Common myeloid progenitor, CD34-positive (primary cell): ENCODE measurements at regions of chr16 and their contacts with region 1.

Region 1: GRCh38 chr16:68040507-68041288 is 17.6 kb downstream of the DUS2 start:
- DNase-seq: peak; percentile 84 to 89 (median 89)
- H3K4me3 ChIP-seq: no peak overlapping the region
- H3K27ac ChIP-seq: no peak overlapping the region
- H3K4me1 ChIP-seq: peaks cover 7 to 21% (median 18%) of the 10 kb centered on the region in 4 experiments
- H3K27me3 ChIP-seq: no peaks in the 10 kb centered on the region

Region 2: DNA sequence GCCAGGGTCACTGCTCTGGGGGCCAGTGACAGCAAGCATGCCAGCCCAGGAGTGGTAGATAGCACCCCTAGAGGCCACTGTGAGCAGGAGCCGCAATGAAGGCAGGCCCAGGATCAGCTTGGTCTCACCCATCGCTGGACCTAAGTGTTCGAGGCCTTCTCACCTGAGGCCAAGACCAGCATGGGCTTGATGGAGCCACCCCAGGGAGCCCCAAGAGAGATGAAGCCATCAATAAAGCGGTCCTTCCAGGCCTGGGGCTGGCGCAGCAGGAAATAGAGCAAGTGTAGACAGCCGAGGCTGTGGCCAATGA is 98.5 kb before region 1 on chr16:
- CTCF ChIA-PET with region 1: interaction called, 16 read pairs
- POLR2A ChIA-PET with region 1: no interaction called
- DNase-seq: peak in 2 of 3 donors; percentile 32 to 37
- H3K4me3 ChIP-seq: no peak overlapping the region
- H3K27ac ChIP-seq: no peak overlapping the region
- H3K4me1 ChIP-seq: peaks cover 1 to 21% (median 15%) of the 10 kb centered on the region in 4 experiments
- H3K27me3 ChIP-seq: no peaks in the 10 kb centered on the region

Region 3: DNA sequence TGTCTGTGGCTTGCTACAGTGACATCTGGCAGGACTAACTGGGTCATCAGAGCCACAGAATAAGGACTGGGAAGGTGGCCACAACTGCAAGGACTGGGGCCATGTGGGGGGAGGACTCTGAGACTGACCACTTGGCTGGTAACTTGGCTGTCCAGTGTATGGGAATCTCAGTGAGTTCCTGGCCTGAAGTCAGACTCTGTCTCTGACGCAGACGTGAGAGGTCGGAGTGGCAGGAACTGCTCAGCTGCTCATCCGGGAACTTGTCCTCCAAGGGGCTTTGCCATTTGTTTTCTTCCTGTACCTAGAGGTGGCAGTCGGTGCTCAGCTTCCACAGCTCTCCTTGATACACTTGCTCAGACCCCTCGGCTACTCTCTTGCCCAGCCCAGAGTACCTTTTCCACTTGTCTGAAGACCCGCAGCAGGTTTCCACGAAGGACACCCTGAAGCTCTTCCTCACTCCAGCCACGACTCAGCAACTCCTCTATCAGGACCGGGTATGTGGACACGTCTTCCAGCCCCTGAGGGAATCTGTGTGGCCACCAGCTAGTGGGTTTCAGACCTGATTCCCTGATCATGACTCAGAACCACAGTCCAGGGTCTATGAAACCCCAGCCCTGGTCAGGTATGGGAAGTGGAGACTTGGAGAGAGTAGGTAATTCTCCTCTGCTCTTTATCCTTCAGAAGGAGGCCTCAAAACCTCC is 53.1 kb before region 1 on chr16:
- CTCF ChIA-PET with region 1: interaction called, 17 read pairs
- POLR2A ChIA-PET with region 1: interaction called, 5 read pairs
- DNase-seq: no peak
- H3K4me3 ChIP-seq: no peak overlapping the region
- H3K27ac ChIP-seq: no peak overlapping the region
- H3K4me1 ChIP-seq: peaks cover 13 to 35% (median 30%) of the 10 kb centered on the region in 4 experiments
- H3K27me3 ChIP-seq: no peaks in the 10 kb centered on the region

Region 4: GRCh38 chr16:67993189-67994039 is 47.3 kb before region 1 on chr16:
- CTCF ChIA-PET with region 1: interaction called, 17 read pairs
- POLR2A ChIA-PET with region 1: no interaction called
- DNase-seq: peak; percentile 85 to 91 (median 88)
- H3K4me3 ChIP-seq: peak overlapping the region in 5 of 7 experiments; percentile 38 to 67 (median 57)
- H3K27ac ChIP-seq: peak overlapping the region in 1 of 2 experiments; percentile 81
- H3K4me1 ChIP-seq: peaks cover 0 to 34% (median 32%) of the 10 kb centered on the region in 4 experiments
- H3K27me3 ChIP-seq: no peaks in the 10 kb centered on the region

Region 5: DNA sequence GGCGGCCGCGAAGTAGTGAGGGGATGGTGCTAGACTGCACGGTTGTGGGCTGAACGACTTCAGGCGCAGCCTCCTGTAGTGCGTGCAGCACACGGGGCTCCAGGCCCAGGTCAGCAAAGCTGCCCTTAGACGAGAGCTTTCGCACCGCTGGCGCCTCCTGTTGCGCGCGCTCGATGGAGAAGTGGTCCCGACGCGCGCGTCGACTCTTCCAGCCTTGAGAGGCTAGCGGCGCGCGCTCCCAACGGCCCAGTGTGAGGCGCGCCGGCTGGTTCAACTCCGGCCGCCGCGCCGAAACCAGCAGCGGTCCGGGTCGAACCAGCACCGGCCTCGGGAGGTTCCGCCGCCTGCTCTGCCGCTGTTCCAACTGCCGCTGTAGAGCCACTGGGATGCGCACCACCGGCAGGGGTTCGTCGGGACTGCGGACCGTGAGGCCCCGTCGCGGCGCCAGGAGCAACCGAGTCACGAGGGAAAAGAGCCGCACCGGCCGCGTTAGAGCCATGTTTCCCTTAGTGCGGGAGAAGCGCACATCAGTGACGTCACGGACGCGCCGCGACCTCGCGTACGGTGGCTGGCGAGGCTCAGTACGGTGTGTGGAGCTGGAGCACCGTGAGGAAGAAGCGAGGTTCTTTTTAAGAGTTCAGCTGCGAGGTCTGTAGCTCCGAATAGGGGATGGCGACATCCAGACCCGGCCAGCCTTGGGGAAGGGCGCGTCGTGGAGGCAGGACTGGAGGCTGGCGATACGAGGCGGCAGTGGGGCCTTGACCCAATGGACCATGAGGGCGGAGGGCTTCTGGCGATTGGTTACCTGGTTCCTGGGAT is 17.8 kb before region 1 on chr16 and contains the starts of genes DDX28 and DUS2:
- CTCF ChIA-PET with region 1: interaction called, 18 read pairs
- POLR2A ChIA-PET with region 1: interaction called, 5 read pairs
- DNase-seq: peak; percentile 94 to 97 (median 97)
- H3K4me3 ChIP-seq: peak within 1 kb of the TSS; percentile 93 to 98 (median 95)
- H3K27ac ChIP-seq: peak within 1 kb of the TSS; percentile 82 to 92
- H3K4me1 ChIP-seq: peaks cover 7 to 29% (median 23%) of the 10 kb centered on the region in 4 experiments
- H3K27me3 ChIP-seq: no peaks in the 10 kb centered on the region